ENCODE measurements at regions of chr5 and their contacts with region 1.

Region 1: DNA sequence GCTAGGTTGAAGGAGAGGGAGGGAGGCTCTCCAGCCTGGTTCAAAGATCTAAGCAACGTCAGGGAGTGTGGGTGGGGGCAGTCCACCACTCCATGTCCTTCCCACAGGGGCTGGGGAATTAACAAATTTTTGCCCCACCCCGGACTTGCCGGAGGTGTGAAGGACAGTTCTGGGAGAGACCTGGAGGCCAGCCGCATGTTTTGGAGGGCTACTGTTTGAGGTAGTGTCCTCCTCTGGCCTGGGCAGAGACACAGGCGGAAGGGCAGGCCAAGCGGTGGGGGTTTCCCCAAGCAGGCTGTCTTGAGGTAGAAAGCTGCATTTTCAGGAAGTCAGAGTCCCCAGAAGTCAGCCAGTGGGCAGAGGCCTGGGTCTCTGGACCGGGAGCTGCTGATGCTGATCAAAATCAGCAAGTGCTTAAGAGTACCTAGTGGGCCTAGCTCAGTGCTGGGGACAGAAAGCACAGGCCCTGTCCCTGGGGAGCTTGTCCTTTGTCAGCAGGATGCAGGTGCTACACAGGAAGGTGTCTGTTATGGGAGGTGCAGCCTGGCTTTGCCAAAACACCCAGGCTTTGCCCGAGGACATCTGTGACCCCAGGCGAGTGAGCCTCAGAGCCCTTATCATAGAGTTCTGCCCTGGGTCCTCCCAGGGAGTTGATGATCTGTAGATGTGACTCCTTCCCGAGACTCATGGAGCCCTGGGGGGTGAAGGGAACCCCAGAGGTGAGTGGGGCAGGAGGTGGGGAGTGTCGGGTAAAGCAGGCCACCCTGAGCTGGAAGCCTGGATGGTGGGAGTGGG is 18.5 kb downstream of the JADE2 start:
- DNase-seq: peak; percentile 30
- H3K4me3 Mint-ChIP-seq: peak overlapping the region; percentile 83
- H3K27ac Mint-ChIP-seq: peak overlapping the region; percentile 94
- H3K4me1 Mint-ChIP-seq: peaks cover 46% of the 10 kb centered on the region
- H3K27me3 Mint-ChIP-seq: no peaks in the 10 kb centered on the region

Region 2: DNA sequence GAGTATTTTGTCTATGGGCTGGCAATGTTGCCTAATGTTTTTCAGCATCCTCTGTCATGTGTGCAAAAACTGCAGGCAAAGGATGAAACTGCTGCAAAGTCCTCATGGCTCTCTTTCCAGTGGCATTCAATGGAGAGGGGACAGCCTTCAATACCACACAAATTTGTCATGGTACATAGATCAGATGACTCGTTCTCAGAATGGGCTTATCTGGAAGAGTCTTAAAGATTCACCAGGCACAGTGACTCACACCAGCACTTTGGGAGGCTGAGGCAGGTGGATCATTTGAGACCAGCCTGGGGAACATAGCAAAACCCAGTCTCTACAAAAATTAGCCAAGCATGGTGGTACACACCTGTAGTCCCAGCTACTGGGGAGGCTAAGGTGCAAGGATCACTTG is 137.6 kb before region 1 on chr5:
- intact Hi-C with region 1: no loop called
- DNase-seq: no peak
- H3K4me3 Mint-ChIP-seq: no peak overlapping the region
- H3K27ac Mint-ChIP-seq: no peak overlapping the region
- H3K4me1 Mint-ChIP-seq: peaks cover 24% of the 10 kb centered on the region
- H3K27me3 Mint-ChIP-seq: no peaks in the 10 kb centered on the region

Region 3: GRCh38 chr5:134555890-134556311 is 11.9 kb after region 1 on chr5:
- intact Hi-C with region 1: loop called (anchors 1 kb)
- DNase-seq: peak; percentile 68
- H3K4me3 Mint-ChIP-seq: peak overlapping the region; percentile 76
- H3K27ac Mint-ChIP-seq: peak overlapping the region; percentile 97
- H3K4me1 Mint-ChIP-seq: peaks cover 33% of the 10 kb centered on the region
- H3K27me3 Mint-ChIP-seq: no peaks in the 10 kb centered on the region

Region 4: DNA sequence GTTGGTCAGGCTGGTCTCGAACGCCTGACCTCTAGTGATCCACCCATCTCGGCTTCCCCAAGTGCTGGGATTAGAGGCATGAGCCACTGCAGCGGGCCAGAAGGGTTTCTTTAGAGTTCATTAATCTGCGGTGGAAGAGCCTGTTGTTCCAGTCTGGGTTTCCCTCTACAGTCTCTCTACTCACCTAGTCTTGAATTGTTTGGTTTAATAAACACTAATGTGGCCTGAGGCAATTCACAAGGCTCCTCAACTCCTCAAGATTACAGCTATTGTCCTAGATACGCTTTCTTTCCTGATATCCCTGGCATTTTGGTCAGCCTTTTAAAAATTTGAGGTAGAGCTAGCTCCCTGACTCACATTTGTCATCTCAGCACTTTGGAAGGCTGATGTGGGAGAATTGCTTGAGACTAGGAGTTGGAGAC is 93.2 kb after region 1 on chr5:
- intact Hi-C with region 1: no loop called
- DNase-seq: no peak
- H3K4me3 Mint-ChIP-seq: no peak overlapping the region
- H3K27ac Mint-ChIP-seq: no peak overlapping the region
- H3K4me1 Mint-ChIP-seq: peaks cover 7% of the 10 kb centered on the region
- H3K27me3 Mint-ChIP-seq: no peaks in the 10 kb centered on the region